ENCODE measurements at regions of chr17 and their contacts with region 1.

Region 1: GRCh38 chr17:56939901-56940343 is 20.9 kb downstream of the COIL start:
- DNase-seq: no peak
- H3K4me3 Mint-ChIP-seq: no peak overlapping the region
- H3K27ac Mint-ChIP-seq: peak overlapping the region; percentile 58
- H3K4me1 Mint-ChIP-seq: peaks cover 23% of the 10 kb centered on the region
- H3K27me3 Mint-ChIP-seq: no peaks in the 10 kb centered on the region

Region 2: DNA sequence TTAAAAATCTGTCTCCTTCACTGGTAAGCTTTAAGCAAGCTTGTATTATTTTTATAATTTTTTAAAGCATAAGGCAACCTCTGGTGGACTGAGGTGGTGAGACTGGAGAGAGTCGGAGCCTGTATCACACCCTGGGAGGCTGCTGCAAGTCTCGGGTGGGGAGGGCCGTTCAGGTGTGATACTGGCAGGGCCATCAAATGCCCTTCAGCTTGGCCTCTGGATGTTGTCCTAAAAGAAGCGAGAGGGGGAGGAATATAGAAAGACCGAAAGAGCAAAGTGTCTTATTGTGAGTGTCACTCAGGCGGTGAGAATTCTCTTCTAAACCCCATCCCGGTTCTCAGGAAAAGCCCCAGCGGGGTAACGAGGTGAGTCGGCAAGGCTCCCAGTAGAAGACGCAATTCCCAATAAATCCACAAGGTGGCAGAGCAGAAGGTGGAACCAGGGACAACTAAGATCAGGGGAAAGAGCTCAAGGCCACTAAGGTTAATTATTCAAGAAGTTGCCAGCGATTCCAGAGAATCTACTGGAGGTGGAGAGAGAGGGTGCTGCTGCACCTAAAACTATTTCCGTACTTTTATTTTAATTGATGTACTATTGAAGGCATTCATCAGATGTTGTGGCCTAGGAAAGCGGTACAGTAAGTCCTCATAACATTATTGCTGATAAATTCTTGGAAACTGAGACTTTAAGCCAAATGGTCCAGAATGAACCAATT is 120.3 kb before region 1 on chr17:
- intact Hi-C with region 1: loop called (anchors 1 kb)
- DNase-seq: peak; percentile 62
- H3K4me3 Mint-ChIP-seq: no peak overlapping the region
- H3K27ac Mint-ChIP-seq: no peak overlapping the region
- H3K4me1 Mint-ChIP-seq: peaks cover 7% of the 10 kb centered on the region
- H3K27me3 Mint-ChIP-seq: peaks cover 6% of the 10 kb centered on the region

Region 3: GRCh38 chr17:56880133-56880532 is 59.8 kb before region 1 on chr17:
- intact Hi-C with region 1: no loop called
- DNase-seq: no peak
- H3K4me3 Mint-ChIP-seq: no peak overlapping the region
- H3K27ac Mint-ChIP-seq: no peak overlapping the region
- H3K4me1 Mint-ChIP-seq: peaks cover 2% of the 10 kb centered on the region
- H3K27me3 Mint-ChIP-seq: peaks cover 4% of the 10 kb centered on the region

Region 4: GRCh38 chr17:56891784-56892183 is 48.1 kb before region 1 on chr17:
- intact Hi-C with region 1: loop called (anchors 1 kb)
- DNase-seq: no peak
- H3K4me3 Mint-ChIP-seq: no peak overlapping the region
- H3K27ac Mint-ChIP-seq: no peak overlapping the region
- H3K4me1 Mint-ChIP-seq: no peaks in the 10 kb centered on the region
- H3K27me3 Mint-ChIP-seq: no peaks in the 10 kb centered on the region

Region 5: GRCh38 chr17:56913864-56914640 is 25.9 kb before region 1 on chr17 and contains the start of gene TRIM25:
- intact Hi-C with region 1: loop called (anchors 1 kb)
- DNase-seq: peak; percentile 76
- H3K4me3 Mint-ChIP-seq: peak within 1 kb of the TSS; percentile 93
- H3K27ac Mint-ChIP-seq: peak within 1 kb of the TSS; percentile 95
- H3K4me1 Mint-ChIP-seq: peaks cover 65% of the 10 kb centered on the region
- H3K27me3 Mint-ChIP-seq: peaks cover 2% of the 10 kb centered on the region
- total RNA-seq, gene TRIM25: 86.9 and 98.2 TPM in 2 replicates

Region 6: DNA sequence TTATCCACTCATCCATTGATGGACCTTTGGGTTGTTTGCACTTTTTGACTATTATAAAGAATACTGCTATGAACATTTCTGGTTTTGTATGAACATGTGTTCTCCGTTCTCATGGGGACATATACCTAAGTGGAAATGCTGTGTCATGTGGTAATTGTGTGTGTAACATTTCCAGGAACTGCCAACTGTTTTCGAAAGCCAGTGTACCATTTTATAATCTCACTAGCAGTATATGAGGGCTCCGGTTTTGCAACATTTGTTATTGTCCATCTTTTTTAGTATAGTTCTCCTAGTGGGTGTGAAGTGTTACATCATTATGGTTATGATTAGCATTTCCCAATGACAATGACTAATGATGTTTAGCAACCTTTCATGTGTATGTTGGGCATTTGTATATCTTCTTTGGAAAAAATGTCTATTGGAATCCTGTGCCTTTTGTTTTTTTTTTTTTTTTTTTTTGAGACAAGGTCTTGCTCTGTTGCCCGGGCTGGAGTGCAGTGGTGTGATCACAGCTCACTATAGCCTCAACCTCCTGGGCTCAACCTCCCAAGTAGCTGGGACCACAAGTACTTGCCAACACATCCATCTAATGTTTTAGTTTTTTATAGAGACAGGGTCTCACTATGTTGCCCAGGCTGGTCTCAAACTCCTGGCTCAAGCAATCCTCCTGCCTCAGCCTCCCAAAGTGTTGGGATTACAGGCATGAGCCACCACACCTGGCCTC is 20.8 kb before region 1 on chr17:
- intact Hi-C with region 1: loop called (anchors 1 kb)
- DNase-seq: no peak
- H3K4me3 Mint-ChIP-seq: no peak overlapping the region
- H3K27ac Mint-ChIP-seq: peak overlapping the region; percentile 25
- H3K4me1 Mint-ChIP-seq: peaks cover 44% of the 10 kb centered on the region
- H3K27me3 Mint-ChIP-seq: peaks cover 5% of the 10 kb centered on the region